Mammary epithelial cell (primary cell): ENCODE measurements at regions of chr2 and their contacts with region 1.

Region 1: DNA sequence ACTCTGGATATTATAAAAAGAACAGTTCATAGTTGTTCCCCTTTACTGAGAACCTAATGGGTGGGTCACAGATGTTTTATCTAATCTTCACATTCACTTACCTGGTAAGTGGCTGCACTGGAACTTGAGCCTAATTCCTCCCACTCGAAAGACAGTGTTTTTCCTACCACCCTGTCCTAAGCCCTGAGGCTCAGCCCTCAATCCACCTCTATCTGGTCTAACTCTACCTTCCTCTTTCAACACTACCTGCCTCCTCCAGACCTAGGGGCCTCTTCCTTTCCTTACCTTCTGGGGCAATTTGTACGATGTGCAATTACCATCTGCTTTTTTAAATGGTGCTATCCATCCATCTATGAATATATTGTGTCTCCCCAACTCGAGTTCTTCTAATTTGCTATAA is 9.7 kb upstream of the KIF3C start:
- DNase-seq: no peak
- H3K4me3 ChIP-seq: no peak overlapping the region
- H3K27ac ChIP-seq: peak overlapping the region; percentile 47
- H3K4me1 ChIP-seq: peaks cover 10% of the 10 kb centered on the region
- H3K27me3 ChIP-seq: no peaks in the 10 kb centered on the region
- CTCF ChIP-seq: no peak

Region 2: DNA sequence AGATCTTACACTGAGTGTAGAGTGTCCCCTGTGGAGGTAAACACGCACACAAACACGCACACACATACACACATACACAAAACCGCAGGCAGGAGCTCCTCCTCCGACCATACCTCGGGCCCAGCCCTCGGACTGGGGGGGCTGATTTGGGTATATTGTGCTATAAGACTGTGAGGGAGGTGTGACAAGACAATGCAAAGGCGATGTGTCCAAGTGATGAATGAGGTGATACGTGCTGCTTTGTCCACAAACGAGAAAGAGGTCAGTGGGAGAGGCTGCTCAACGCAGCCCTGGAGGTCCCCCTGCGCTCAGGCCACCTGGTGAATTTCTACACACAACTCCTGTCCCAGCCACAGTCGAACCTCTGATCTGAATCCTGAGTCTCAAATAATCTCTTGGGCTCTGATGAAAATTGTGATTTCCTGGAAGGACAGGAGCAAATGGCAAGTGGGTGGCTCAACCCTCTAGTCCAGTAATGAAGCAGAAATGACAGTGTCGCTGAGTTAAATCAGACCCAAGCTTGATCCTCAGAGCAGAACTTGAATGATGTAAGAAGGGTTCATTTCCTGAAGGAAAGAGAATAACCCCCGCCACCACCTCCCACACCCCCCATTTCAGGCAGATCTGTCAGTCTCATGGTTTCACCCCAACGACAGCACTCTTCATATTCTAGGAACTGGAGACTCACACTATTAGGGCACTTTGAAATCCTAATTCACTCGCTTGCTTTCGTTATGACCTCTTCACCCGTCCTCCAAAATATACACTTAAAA is 64.8 kb before region 1 on chr2:
- CTCF ChIA-PET with region 1: no interaction called
- dilution Hi-C with region 1: loop called (anchors 5 kb)
- in situ Hi-C with region 1: no loop called
- intact Hi-C with region 1: no loop called
- DNase-seq: no peak
- H3K4me3 ChIP-seq: no peak overlapping the region
- H3K27ac ChIP-seq: no peak overlapping the region
- H3K4me1 ChIP-seq: no peaks in the 10 kb centered on the region
- H3K27me3 ChIP-seq: no peaks in the 10 kb centered on the region
- CTCF ChIP-seq: no peak

Region 3: GRCh38 chr2:26054598-26055348 is 62.8 kb after region 1 on chr2:
- CTCF ChIA-PET with region 1: no interaction called
- dilution Hi-C with region 1: loop called (anchors 5 kb)
- in situ Hi-C with region 1: no loop called
- intact Hi-C with region 1: no loop called
- DNase-seq: no peak
- H3K4me3 ChIP-seq: no peak overlapping the region
- H3K27ac ChIP-seq: no peak overlapping the region
- H3K4me1 ChIP-seq: no peaks in the 10 kb centered on the region
- H3K27me3 ChIP-seq: peaks cover 2% of the 10 kb centered on the region
- CTCF ChIP-seq: no peak

Region 4: GRCh38 chr2:26139269-26140183 is 147.6 kb after region 1 on chr2:
- CTCF ChIA-PET with region 1: interaction called, 10 read pairs
- dilution Hi-C with region 1: no loop called
- in situ Hi-C with region 1: loop called (anchors 10 kb)
- intact Hi-C with region 1: no loop called
- DNase-seq: no peak
- H3K4me3 ChIP-seq: no peak overlapping the region
- H3K27ac ChIP-seq: no peak overlapping the region
- H3K4me1 ChIP-seq: no peaks in the 10 kb centered on the region
- H3K27me3 ChIP-seq: no peaks in the 10 kb centered on the region
- CTCF ChIP-seq: no peak